ENCODE measurements at regions of chr4 and their contacts with region 1.

Region 1: DNA sequence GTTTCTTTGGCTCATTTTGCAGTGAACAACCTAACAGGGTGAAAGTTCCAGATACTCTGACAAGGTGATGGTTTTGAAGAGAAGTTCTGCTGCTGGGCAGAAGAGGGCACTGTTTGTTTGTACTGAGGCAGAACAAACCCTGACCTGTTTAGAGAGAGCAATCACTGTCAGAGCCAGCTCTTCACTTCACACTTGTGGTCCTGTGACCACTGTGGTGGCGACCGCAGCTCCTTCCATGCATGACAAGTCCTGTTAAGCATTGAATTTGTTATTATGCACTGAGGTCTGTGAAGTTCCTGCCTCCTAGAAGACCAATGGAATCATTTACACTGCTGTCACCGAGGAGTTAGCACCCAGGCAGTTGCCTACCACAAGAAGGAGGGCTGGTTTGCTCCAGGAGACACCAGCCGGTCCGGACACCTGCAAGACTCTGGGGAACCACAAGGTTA is 86.6 kb downstream of the ZNF330 start:
- DNase-seq: peak in 1 of 2 experiments; percentile 58
- H3K4me3 ChIP-seq: no peak overlapping the region
- H3K27ac ChIP-seq: no peak overlapping the region
- H3K4me1 ChIP-seq: no peaks in the 10 kb centered on the region
- H3K27me3 ChIP-seq: no peaks in the 10 kb centered on the region
- CTCF ChIP-seq: peak in 2 of 3 experiments; percentile 75 to 89; a peak in 3 of 4 replicates
- EP300 ChIP-seq: no peak
- POLR2A ChIP-seq: no peak
- RAD21 ChIP-seq: peak; percentile 89 to 94

Region 2: DNA sequence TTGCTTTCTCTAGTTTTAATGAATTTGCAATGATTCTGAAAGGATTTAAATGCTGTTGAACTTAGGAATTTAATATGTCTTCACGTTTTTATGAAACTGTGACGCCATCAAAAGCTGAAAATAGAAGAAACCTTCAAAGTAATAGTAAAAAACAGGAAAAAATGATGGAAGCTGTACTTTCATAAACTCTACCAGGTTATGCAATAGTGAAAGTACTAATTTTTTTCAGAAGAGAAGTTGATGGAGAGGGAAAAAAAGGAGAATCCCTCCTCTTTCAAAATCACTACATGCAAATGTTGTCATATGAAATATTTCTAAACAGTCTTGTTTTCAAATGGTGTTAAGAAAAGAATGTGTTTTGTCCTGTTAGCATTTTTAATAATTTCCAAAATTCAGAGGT is 13.0 kb before region 1 on chr4:
- CTCF ChIA-PET with region 1: interaction called, 15 read pairs
- POLR2A ChIA-PET with region 1: no interaction called
- DNase-seq: no peak
- H3K4me3 ChIP-seq: no peak overlapping the region
- H3K27ac ChIP-seq: no peak overlapping the region
- H3K4me1 ChIP-seq: no peaks in the 10 kb centered on the region
- H3K27me3 ChIP-seq: no peaks in the 10 kb centered on the region
- CTCF ChIP-seq: no peak
- EP300 ChIP-seq: no peak
- POLR2A ChIP-seq: no peak
- RAD21 ChIP-seq: no peak